ENCODE measurements at regions of chr16 and their contacts with region 1.

Region 1: DNA sequence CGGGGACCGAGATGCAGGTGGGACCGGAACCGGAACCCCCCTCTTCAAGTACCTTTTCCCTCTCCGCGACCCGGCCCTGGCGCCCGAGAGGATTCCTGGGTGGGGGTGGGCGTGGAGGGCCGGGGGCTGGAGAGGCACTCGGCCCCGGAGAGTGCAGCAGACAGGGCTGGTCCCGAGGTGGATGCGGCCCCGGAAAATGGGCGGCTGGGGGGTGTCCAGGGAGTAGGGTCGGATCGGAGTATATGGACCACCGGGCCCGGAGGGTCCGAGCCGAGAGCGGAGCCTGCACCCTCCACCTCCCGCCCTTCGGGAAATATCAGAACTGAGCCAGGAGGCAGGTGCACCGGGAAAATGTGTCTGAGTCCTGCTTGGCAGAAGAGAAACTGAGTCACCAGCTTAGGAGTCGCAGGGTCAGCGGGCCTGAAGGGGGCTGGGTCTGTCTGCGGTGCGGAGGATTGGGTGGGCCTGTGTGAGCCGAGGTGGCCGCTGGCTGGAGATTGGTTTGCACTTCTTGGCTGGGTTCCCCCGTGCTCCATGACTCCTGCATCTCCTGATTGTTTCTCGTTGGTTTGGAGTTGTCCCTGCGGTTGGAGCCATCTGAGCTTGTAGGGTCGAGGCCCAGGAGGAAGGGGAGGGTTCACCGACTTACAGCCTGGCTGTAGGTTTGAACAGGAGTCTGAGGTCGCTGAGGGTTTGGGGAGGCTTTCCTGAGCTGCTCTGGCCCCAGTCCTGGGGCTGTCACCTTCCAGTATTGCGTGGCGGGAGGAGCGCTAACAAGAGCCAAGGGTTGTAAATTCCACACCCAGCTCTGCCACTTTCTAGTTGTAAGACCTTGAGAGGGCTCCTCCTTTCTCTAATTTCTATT is 518 bp downstream of the SH2B1 start:
- DNase-seq: peak; percentile 19
- H3K4me3 Mint-ChIP-seq: peak overlapping the region; percentile 96
- H3K27ac Mint-ChIP-seq: peak overlapping the region; percentile 98
- H3K4me1 Mint-ChIP-seq: peaks cover 8% of the 10 kb centered on the region
- H3K27me3 Mint-ChIP-seq: no peaks in the 10 kb centered on the region

Region 2: DNA sequence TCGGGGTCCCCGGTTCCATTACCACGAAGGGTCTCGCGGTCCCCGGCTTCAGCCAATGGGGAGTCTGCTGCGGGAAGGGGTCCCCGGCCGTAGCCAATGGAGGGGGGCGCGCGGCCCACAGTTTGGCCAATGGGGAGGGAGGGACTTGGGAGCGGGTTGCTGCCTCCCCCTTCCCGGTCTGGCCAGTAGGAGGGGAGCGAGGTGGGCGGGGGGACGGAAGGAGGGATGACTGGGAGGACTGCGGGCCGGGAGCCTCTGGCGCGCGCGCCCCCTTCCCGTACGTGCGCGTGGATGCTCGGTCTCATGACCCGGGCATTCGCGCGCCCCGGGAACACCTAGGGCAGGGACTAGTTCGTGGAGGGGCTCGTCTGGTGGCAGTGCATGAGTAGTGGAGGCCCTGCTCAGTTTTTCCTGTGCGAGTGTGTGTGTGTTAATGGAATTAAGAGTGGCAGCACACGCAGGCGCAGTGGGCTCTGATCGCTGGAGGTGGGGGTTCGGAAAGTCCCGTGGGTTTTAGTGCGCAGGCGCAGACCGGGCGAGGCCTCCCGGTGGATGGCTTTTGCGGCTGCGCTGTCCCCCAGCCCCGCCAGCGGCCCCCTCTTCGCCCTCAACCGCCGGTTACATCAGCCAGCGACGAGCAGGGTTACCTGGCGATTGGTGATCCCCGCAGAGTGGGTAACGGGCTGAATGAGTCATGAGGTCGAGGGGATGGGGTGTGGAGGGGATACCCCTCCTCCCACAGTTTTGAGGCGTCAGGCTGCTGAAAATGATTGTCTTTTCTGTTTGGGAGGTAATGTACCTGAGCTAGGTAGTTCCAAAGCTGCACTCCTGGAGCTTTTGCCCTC is 40.1 kb before region 1 on chr16:
- intact Hi-C with region 1: loop called (anchors 1 kb)
- DNase-seq: peak; percentile 93
- H3K4me3 Mint-ChIP-seq: peak overlapping the region; percentile 99
- H3K27ac Mint-ChIP-seq: peak overlapping the region; percentile 100
- H3K4me1 Mint-ChIP-seq: peaks cover 31% of the 10 kb centered on the region
- H3K27me3 Mint-ChIP-seq: no peaks in the 10 kb centered on the region

Region 3: DNA sequence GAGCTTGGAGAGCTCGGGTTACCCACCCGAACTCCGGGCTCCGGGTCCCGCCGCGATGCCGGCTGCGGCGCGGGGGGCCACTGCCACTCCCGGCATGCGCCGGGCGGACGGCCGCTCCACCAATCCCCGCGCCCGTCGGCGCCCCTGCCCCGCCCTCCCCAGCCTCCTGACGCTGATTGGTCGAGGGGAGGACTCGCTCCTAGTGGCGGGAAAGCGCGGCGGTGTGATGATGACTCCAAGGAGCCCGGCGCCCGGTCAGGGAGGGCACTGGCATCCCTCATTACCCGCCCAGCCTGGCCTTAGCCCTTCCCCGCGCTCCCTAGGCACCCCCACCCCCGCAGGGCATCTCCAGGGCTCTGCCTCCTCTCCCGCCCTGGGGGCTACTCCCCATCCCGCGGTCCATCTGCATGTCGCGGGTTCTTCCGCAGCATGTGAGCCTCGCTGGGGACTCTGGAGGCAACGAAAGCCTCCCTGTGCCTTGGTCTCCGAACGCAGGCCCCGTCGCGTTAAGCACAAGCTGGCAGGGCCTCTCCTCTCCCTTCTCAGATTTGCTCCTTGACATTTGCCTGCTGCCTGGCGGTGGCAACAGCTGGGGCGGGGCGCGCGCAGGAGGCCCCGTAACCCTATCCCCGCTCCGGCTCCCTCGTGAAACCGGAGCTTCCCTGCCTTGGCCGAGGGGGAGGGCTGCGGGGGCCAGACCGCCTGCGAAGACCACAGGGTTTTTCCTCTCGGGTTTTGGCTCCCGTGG is 15.9 kb after region 1 on chr16:
- intact Hi-C with region 1: loop called (anchors 2 kb)
- DNase-seq: peak; percentile 81
- H3K4me3 Mint-ChIP-seq: peak overlapping the region; percentile 89
- H3K27ac Mint-ChIP-seq: peak overlapping the region; percentile 52
- H3K4me1 Mint-ChIP-seq: peaks cover 15% of the 10 kb centered on the region
- H3K27me3 Mint-ChIP-seq: peaks cover 2% of the 10 kb centered on the region